Sciatic nerve (tissue), 2 donors: ENCODE measurements at regions of chr14 and their contacts with region 1.

Region 1: GRCh38 chr14:85187521-85187920 is 342.4 kb upstream of the FLRT2 start:
- DNase-seq: no peak
- ATAC-seq: no peak

Region 2: DNA sequence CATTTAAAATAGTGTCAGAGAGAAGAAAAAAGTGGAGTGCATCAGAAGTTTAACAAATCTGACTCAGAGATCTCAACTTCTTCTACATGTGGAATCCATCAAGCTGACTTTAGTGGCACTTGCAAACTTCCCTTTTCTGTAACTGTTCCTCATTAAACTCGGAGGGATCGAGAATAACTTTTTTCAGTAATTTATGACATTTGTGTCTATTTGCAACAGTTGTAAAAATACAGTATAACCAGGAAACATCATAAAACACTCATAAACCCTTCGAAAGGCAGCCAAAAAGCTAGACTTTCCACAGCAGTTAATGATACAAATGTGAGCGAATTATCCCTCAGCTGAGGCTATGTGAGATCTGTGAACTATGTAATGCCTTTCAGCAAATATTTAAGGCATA is 1717.1 kb before region 1 on chr14:
- intact Hi-C with region 1: no loop called
- DNase-seq: no peak
- ATAC-seq: peak; percentile 55

Region 3: GRCh38 chr14:84482256-84483066 is 705.1 kb before region 1 on chr14:
- intact Hi-C with region 1: no loop called
- DNase-seq: no peak
- ATAC-seq: no peak

Region 4: GRCh38 chr14:84750763-84751554 is 436.6 kb before region 1 on chr14:
- intact Hi-C with region 1: loop called (anchors 5 kb)
- DNase-seq: no peak
- ATAC-seq: no peak

Region 5: DNA sequence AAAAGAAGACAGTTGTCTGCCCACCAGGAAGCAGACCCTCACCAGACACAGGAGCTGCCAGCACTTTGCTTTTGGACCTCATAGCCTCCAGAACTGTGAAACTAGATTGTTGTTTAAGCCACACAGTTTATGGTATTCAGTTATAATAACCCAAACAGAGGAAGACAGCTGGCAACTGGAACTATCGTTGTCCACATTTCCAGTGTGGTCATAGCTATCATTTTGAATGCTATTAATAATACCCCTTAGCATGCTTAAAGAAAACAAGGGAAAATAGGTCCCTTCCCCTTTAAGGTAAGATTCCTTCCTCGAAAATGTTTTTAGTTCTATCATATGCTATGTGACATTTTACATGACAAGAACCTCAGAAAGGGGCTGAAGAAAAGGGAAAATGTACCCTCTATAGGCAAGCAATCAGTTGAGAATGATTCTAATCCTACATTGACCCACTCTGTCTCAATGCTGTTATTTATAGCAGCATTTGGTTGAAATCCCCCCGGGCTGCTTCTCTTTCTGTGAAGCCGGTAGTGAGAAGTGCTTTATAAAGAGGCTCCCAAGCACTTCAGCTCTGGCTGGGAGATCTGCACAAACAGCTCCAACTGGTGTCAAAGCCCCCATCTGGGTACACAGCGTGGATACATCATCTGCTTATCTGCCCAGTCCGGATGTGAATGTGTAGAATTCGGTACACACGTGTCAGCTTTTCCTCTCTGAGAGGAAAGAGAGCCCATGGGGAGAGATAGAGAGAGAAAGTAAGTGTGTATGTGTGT is 121.2 kb after region 1 on chr14:
- intact Hi-C with region 1: no loop called
- DNase-seq: no peak
- ATAC-seq: no peak